HCT116 (cell line): ENCODE measurements at regions of chr11 and their contacts with region 1.

Region 1: DNA sequence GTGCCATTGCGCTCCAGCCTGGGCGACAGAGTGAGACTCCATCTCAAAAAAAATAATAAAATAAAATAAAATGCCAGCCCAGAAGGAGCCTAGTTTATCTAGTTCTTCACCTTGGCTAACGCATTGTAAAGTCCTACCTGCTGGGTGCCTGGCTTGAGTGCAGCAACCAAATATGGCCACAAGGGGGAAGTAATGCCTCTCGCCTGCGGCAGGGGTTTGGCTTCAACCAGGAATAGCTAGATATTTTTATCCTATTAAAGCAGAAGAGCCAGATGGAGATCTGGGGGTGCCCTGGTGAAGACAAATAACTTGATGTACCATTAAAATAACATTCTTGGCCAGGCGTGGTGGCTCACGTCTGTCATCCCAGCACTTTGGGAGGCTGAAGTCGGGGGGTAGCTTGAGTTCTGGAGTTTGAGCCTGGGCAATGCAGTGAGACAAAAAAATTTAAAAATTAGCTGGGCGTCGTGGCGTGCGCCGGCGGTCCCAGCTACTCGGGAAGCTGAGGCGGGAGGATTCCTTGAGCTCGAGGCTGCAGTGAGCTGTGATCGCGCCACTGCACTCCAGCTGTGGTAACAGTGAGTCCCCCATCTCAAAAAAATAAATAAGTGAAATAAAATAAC is 20.6 kb upstream of the PLEKHB1 start:
- DNase-seq: peak; percentile 56
- ATAC-seq: peak; percentile 96
- H3K4me3 ChIP-seq: no peak overlapping the region
- H3K27ac ChIP-seq: no peak overlapping the region
- H3K4me1 ChIP-seq: peaks cover 0 to 4% of the 10 kb centered on the region in 2 experiments; a peak in 1 of 4 replicates
- H3K27me3 ChIP-seq: peaks cover 9% of the 10 kb centered on the region; the same call in 1 of the 2 replicates
- CTCF ChIP-seq: peak; percentile 79 to 95 (median 93)
- POLR2A ChIP-seq: no peak
- RAD21 ChIP-seq: peak; percentile 92

Region 2: GRCh38 chr11:73478738-73479347 is 147.0 kb before region 1 on chr11:
- CTCF ChIA-PET with region 1: interaction called, 18 read pairs
- POLR2A ChIA-PET with region 1: no interaction called
- RAD21 ChIA-PET with region 1: interaction called in 1 of 2 experiments, 6 read pairs
- intact Hi-C with region 1: no loop called
- DNase-seq: peak; percentile 26
- ATAC-seq: peak; percentile 95
- H3K4me3 ChIP-seq: no peak overlapping the region
- H3K27ac ChIP-seq: no peak overlapping the region
- H3K4me1 ChIP-seq: peaks cover 6 to 9% of the 10 kb centered on the region in 2 experiments
- H3K27me3 ChIP-seq: no peaks in the 10 kb centered on the region
- CTCF ChIP-seq: peak; percentile 54 to 94 (median 90); a peak in 5 of 6 replicates
- POLR2A ChIP-seq: no peak
- RAD21 ChIP-seq: peak; percentile 69

Region 3: DNA sequence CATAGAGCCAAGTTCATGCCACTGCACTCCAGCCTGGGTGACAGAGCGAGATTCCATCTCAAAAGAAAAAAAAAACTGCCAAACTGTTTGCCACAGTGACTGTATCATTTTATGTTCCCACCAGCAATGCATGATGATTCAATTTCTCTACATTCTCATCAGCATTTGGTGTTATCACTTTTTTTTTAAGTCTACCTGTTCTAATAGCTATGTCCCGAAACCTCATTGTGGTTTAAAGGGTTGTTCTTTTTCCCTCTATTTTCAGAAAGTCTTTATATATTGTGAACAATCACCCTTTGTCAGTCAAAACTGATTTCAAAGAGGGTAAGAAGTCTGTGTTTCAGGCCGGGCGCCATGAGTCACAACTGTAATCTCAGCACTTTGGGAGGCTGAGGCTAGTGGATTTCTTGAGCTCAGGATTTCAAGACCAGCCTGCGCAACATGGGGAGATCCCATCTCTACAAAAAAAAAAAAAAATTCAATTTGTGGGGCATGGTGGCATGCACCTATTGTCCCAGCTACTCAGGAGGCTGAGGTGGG is 13.1 kb before region 1 on chr11:
- CTCF ChIA-PET with region 1: interaction called, 10 read pairs
- POLR2A ChIA-PET with region 1: no interaction called
- RAD21 ChIA-PET with region 1: no interaction called
- intact Hi-C with region 1: no loop called
- DNase-seq: no peak
- ATAC-seq: no peak
- H3K4me3 ChIP-seq: no peak overlapping the region
- H3K27ac ChIP-seq: no peak overlapping the region
- H3K4me1 ChIP-seq: no peaks in the 10 kb centered on the region
- H3K27me3 ChIP-seq: no peaks in the 10 kb centered on the region
- CTCF ChIP-seq: no peak
- POLR2A ChIP-seq: no peak
- RAD21 ChIP-seq: no peak

Region 4: DNA sequence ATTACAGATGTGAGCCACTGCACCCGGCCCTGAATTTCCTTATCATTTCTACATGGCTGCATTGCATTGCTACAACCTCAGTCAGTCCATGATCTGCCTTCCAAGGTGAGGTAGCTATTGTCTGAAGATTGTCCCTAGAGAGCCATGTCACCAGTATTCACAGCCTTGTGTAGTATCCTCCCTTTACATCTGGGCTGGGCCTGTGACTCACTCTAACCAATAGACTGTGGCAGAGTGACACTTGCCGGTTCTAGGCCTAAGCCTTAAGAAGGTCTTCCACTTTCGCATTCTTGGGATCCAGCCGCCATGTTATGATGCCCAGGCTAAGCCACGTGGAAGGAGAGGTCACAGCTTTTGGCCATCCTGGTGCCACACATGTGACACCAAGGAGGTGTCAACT is 10.4 kb after region 1 on chr11:
- CTCF ChIA-PET with region 1: interaction called, 19 read pairs
- POLR2A ChIA-PET with region 1: no interaction called
- RAD21 ChIA-PET with region 1: interaction called, 3 to 4 read pairs
- intact Hi-C with region 1: no loop called
- DNase-seq: no peak
- ATAC-seq: no peak
- H3K4me3 ChIP-seq: no peak overlapping the region
- H3K27ac ChIP-seq: no peak overlapping the region
- H3K4me1 ChIP-seq: no peaks in the 10 kb centered on the region
- H3K27me3 ChIP-seq: no peaks in the 10 kb centered on the region
- CTCF ChIP-seq: no peak
- POLR2A ChIP-seq: no peak
- RAD21 ChIP-seq: no peak

Region 5: GRCh38 chr11:73647459-73648100 is 21.8 kb after region 1 on chr11:
- CTCF ChIA-PET with region 1: interaction called, 12 read pairs
- POLR2A ChIA-PET with region 1: interaction called, 5 read pairs
- RAD21 ChIA-PET with region 1: interaction called in 1 of 2 experiments, 5 read pairs
- intact Hi-C with region 1: no loop called
- DNase-seq: peak; percentile 86
- ATAC-seq: peak; percentile 97
- H3K4me3 ChIP-seq: peak overlapping the region; percentile 48 to 53
- H3K27ac ChIP-seq: peak overlapping the region; percentile 21; the same call in 1 of the 2 replicates
- H3K4me1 ChIP-seq: peaks cover 15 to 27% of the 10 kb centered on the region in 2 experiments
- H3K27me3 ChIP-seq: no peaks in the 10 kb centered on the region
- CTCF ChIP-seq: no peak
- POLR2A ChIP-seq: no peak
- RAD21 ChIP-seq: no peak

Region 6: GRCh38 chr11:73661035-73661628 is 35.3 kb after region 1 on chr11:
- CTCF ChIA-PET with region 1: interaction called, 79 read pairs
- POLR2A ChIA-PET with region 1: interaction called, 7 read pairs
- RAD21 ChIA-PET with region 1: interaction called, 19 to 21 read pairs
- intact Hi-C with region 1: loop called (anchors 1 kb)
- DNase-seq: peak; percentile 43
- ATAC-seq: peak; percentile 96
- H3K4me3 ChIP-seq: no peak overlapping the region
- H3K27ac ChIP-seq: peak overlapping the region; percentile 12; the same call in 1 of the 2 replicates
- H3K4me1 ChIP-seq: peaks cover 5 to 20% of the 10 kb centered on the region in 2 experiments
- H3K27me3 ChIP-seq: no peaks in the 10 kb centered on the region
- CTCF ChIP-seq: peak; percentile 92 to 95 (median 92)
- POLR2A ChIP-seq: no peak
- RAD21 ChIP-seq: peak; percentile 99